MCF 10A (cell line): ENCODE measurements at regions of chrX and their contacts with region 1.

Region 1: GRCh38 chrX:48083212-48083611 is 11.8 kb upstream of the ZNF630 start:
- DNase-seq: peak; percentile 60
- H3K4me3 Mint-ChIP-seq: no peak overlapping the region
- H3K27ac Mint-ChIP-seq: no peak overlapping the region
- H3K4me1 Mint-ChIP-seq: no peaks in the 10 kb centered on the region
- H3K27me3 Mint-ChIP-seq: no peaks in the 10 kb centered on the region
- CTCF ChIP-seq: peak; percentile 39

Region 2: GRCh38 chrX:47936224-47936939 is 146.8 kb before region 1 on chrX:
- CTCF ChIA-PET with region 1: no interaction called
- POLR2A ChIA-PET with region 1: no interaction called
- intact Hi-C with region 1: no loop called
- DNase-seq: no peak
- H3K4me3 Mint-ChIP-seq: no peak overlapping the region
- H3K27ac Mint-ChIP-seq: no peak overlapping the region
- H3K4me1 Mint-ChIP-seq: no peaks in the 10 kb centered on the region
- H3K27me3 Mint-ChIP-seq: no peaks in the 10 kb centered on the region
- CTCF ChIP-seq: no peak

Region 3: GRCh38 chrX:48071064-48071985 is 11.9 kb before region 1 on chrX and contains the start of gene ZNF630:
- CTCF ChIA-PET with region 1: no interaction called
- POLR2A ChIA-PET with region 1: no interaction called
- intact Hi-C with region 1: no loop called
- DNase-seq: no peak
- H3K4me3 Mint-ChIP-seq: peak within 1 kb of the TSS; percentile 81
- H3K27ac Mint-ChIP-seq: peak within 1 kb of the TSS; percentile 92
- H3K4me1 Mint-ChIP-seq: no peaks in the 10 kb centered on the region
- H3K27me3 Mint-ChIP-seq: no peaks in the 10 kb centered on the region
- CTCF ChIP-seq: no peak
- total RNA-seq, gene ZNF630: 2.4 and 3.2 TPM in 2 replicates

Region 4: GRCh38 chrX:48101443-48101842 is 18.2 kb after region 1 on chrX:
- CTCF ChIA-PET with region 1: no interaction called
- POLR2A ChIA-PET with region 1: no interaction called
- intact Hi-C with region 1: no loop called
- DNase-seq: no peak
- H3K4me3 Mint-ChIP-seq: no peak overlapping the region
- H3K27ac Mint-ChIP-seq: no peak overlapping the region
- H3K4me1 Mint-ChIP-seq: no peaks in the 10 kb centered on the region
- H3K27me3 Mint-ChIP-seq: no peaks in the 10 kb centered on the region
- CTCF ChIP-seq: no peak

Region 5: GRCh38 chrX:48487362-48487785 is 404.2 kb after region 1 on chrX:
- CTCF ChIA-PET with region 1: interaction called, 7 read pairs
- POLR2A ChIA-PET with region 1: interaction called, 3 read pairs
- intact Hi-C with region 1: loop called (anchors 2 kb)
- DNase-seq: peak; percentile 93
- H3K4me3 Mint-ChIP-seq: peak overlapping the region; percentile 22
- H3K27ac Mint-ChIP-seq: peak overlapping the region; percentile 97
- H3K4me1 Mint-ChIP-seq: peaks cover 23% of the 10 kb centered on the region
- H3K27me3 Mint-ChIP-seq: no peaks in the 10 kb centered on the region
- CTCF ChIP-seq: no peak

Region 6: GRCh38 chrX:48493890-48494364 is 410.7 kb after region 1 on chrX:
- CTCF ChIA-PET with region 1: interaction called, 7 read pairs
- POLR2A ChIA-PET with region 1: interaction called, 3 read pairs
- intact Hi-C with region 1: loop called (anchors 1 kb)
- DNase-seq: peak; percentile 57
- H3K4me3 Mint-ChIP-seq: no peak overlapping the region
- H3K27ac Mint-ChIP-seq: no peak overlapping the region
- H3K4me1 Mint-ChIP-seq: peaks cover 26% of the 10 kb centered on the region
- H3K27me3 Mint-ChIP-seq: no peaks in the 10 kb centered on the region
- CTCF ChIP-seq: peak; percentile 33

Region 7: DNA sequence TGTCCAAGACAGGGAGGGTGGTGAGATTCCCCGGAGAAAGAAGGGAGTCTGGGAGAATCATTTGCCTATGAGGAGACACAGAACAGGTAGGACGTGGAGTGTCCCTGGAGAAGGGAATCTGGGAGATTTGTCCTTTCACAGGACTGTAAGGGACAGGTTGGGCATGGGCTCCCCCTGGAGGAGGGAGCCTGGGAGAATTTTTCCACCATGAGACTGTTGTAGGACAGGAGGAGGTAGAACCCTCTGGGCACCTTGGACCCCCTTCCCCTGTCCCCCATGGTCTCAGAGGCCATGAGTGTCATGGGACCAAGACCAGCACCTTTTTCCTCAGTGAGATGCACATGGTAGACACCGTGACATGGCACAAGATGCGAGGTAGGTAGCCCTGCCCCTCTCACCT is 428.3 kb after region 1 on chrX:
- CTCF ChIA-PET with region 1: interaction called, 7 read pairs
- POLR2A ChIA-PET with region 1: interaction called, 5 read pairs
- intact Hi-C with region 1: loop called (anchors 1 kb)
- DNase-seq: no peak
- H3K4me3 Mint-ChIP-seq: no peak overlapping the region
- H3K27ac Mint-ChIP-seq: no peak overlapping the region
- H3K4me1 Mint-ChIP-seq: peaks cover 5% of the 10 kb centered on the region
- H3K27me3 Mint-ChIP-seq: no peaks in the 10 kb centered on the region
- CTCF ChIP-seq: no peak

Region 8: GRCh38 chrX:48589482-48590162 is 506.4 kb after region 1 on chrX:
- CTCF ChIA-PET with region 1: no interaction called
- POLR2A ChIA-PET with region 1: no interaction called
- intact Hi-C with region 1: loop called (anchors 5 kb)
- DNase-seq: peak; percentile 81
- H3K4me3 Mint-ChIP-seq: peak overlapping the region; percentile 70
- H3K27ac Mint-ChIP-seq: peak overlapping the region; percentile 90
- H3K4me1 Mint-ChIP-seq: peaks cover 7% of the 10 kb centered on the region
- H3K27me3 Mint-ChIP-seq: no peaks in the 10 kb centered on the region
- CTCF ChIP-seq: no peak